ENCODE measurements at regions of chr7 and their contacts with region 1.

Region 1: DNA sequence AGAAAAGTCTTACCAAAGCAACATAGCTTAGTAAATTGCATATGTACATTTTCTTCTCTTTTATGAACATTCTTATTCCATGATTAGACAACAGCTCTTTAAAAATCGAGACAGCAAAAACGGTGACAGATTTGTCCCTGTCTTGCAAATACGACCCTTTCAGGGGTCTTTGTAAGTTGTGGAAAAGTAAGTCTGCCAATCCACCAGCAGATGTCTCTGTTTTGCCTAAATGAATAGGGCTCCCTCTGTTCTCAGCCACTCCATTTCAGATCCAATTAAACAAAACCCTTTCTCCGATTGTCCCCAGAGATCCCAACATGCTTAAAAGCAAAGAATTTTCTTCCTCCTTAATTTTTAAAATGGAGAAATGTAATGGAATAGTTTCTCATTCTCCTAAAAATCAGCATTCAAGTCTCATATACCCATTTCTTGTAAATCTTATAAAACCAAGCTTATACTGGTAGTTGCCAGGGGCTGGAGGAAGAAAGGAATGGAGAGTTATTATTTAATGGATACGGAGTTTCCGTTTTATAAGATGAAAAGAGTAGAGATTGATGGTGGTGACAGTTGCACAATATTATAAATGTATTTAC is 61.0 kb upstream of the NFE2L3 start:
- DNase-seq: peak; percentile 80
- H3K4me3 ChIP-seq: no peak overlapping the region
- H3K27ac ChIP-seq: no peak overlapping the region
- H3K4me1 ChIP-seq: peaks cover 0 to 2% of the 10 kb centered on the region in 2 experiments; a peak in 2 of 4 replicates
- H3K27me3 ChIP-seq: no peaks in the 10 kb centered on the region
- CTCF ChIP-seq: peak; percentile 97
- EP300 ChIP-seq: no peak
- RAD21 ChIP-seq: peak; percentile 94

Region 2: GRCh38 chr7:26078437-26079336 is 12.3 kb before region 1 on chr7:
- CTCF ChIA-PET with region 1: interaction called, 162 read pairs
- POLR2A ChIA-PET with region 1: no interaction called
- DNase-seq: peak; percentile 90
- H3K4me3 ChIP-seq: peak overlapping the region in 1 of 2 experiments; percentile 19; a peak in 1 of 4 replicates
- H3K27ac ChIP-seq: no peak overlapping the region
- H3K4me1 ChIP-seq: peaks cover 3 to 7% of the 10 kb centered on the region in 2 experiments; a peak in 2 of 4 replicates
- H3K27me3 ChIP-seq: peaks cover 46% of the 10 kb centered on the region; the same call in 1 of the 2 replicates
- CTCF ChIP-seq: peak; percentile 67
- EP300 ChIP-seq: no peak
- RAD21 ChIP-seq: peak; percentile 73

Region 3: GRCh38 chr7:26117142-26117807 is 26.3 kb after region 1 on chr7:
- CTCF ChIA-PET with region 1: interaction called, 27 read pairs
- POLR2A ChIA-PET with region 1: no interaction called
- DNase-seq: peak; percentile 58
- H3K4me3 ChIP-seq: no peak overlapping the region
- H3K27ac ChIP-seq: no peak overlapping the region
- H3K4me1 ChIP-seq: no peaks in the 10 kb centered on the region
- H3K27me3 ChIP-seq: no peaks in the 10 kb centered on the region; the same call in 1 of the 2 replicates
- CTCF ChIP-seq: no peak
- EP300 ChIP-seq: no peak
- RAD21 ChIP-seq: no peak

Region 4: GRCh38 chr7:26167301-26167934 is 76.4 kb after region 1 on chr7:
- CTCF ChIA-PET with region 1: interaction called, 11 read pairs
- POLR2A ChIA-PET with region 1: no interaction called
- DNase-seq: no peak
- H3K4me3 ChIP-seq: no peak overlapping the region
- H3K27ac ChIP-seq: no peak overlapping the region
- H3K4me1 ChIP-seq: 0 out of 4 replicates have a peak, but pooled peaks cover 0 to 3% of the 10 kb centered on the region in 2 experiments
- H3K27me3 ChIP-seq: no peaks in the 10 kb centered on the region
- CTCF ChIP-seq: no peak
- EP300 ChIP-seq: no peak
- RAD21 ChIP-seq: no peak

Region 5: GRCh38 chr7:26346611-26347203 is 255.7 kb after region 1 on chr7:
- CTCF ChIA-PET with region 1: interaction called, 13 read pairs
- POLR2A ChIA-PET with region 1: no interaction called
- DNase-seq: no peak
- H3K4me3 ChIP-seq: no peak overlapping the region
- H3K27ac ChIP-seq: no peak overlapping the region
- H3K4me1 ChIP-seq: peaks cover 0 to 3% of the 10 kb centered on the region in 2 experiments; a peak in 2 of 4 replicates
- H3K27me3 ChIP-seq: no peaks in the 10 kb centered on the region
- CTCF ChIP-seq: no peak
- EP300 ChIP-seq: no peak
- RAD21 ChIP-seq: no peak

Region 6: GRCh38 chr7:26743205-26743604 is 652.2 kb after region 1 on chr7:
- CTCF ChIA-PET with region 1: no interaction called
- POLR2A ChIA-PET with region 1: no interaction called
- DNase-seq: no peak
- H3K4me3 ChIP-seq: no peak overlapping the region
- H3K27ac ChIP-seq: no peak overlapping the region
- H3K4me1 ChIP-seq: no peaks in the 10 kb centered on the region
- H3K27me3 ChIP-seq: no peaks in the 10 kb centered on the region
- CTCF ChIP-seq: no peak
- EP300 ChIP-seq: no peak
- RAD21 ChIP-seq: no peak